ENCODE measurements at regions of chr7 and their contacts with region 1.

Region 1: DNA sequence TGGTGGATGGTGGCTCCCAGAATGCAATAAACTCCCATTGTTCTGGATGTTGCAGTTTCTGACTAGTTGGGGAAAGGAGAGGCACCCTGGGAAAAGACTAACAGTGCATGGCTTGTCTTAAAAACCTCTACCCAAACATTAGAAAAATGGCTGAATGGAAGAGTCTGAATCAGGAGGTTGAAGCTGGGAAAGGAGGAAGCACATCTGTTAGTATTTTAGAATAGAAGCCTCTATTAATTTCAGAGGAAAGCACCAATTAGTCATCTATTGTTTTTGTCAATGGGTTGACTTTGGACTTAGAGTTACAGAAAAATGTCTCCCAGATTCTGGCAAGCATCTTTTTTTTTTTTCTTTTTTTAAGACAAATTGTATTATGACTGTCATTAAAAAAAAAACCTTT is 56.1 kb upstream of the ELMO1 start:
- DNase-seq: peak in 3 of 42 donors; percentile 41 to 45 (median 45)

Region 2: DNA sequence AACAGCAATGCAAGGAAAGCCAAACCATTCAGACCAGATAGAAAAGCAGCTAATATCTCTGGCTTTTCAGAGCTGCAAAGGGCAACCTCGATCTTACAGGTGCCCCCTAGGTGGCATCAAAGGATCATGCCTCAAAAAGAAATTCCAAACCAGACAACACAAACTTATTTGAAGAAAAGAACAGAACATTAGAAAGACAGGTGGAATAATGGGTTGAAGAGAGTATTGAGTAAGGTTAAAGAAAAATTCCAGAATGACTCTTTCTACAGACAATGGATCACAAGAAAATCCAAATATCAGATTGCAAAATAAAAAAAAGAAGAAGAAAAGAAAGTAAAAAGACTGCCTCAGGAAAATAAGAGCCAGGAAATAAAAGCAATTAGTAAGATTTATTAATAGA is 269.9 kb before region 1 on chr7:
- intact Hi-C with region 1: loop called (anchors 10 kb)
- DNase-seq: peak in 20 of 42 donors; percentile 31 to 78 (median 54)

Region 3: DNA sequence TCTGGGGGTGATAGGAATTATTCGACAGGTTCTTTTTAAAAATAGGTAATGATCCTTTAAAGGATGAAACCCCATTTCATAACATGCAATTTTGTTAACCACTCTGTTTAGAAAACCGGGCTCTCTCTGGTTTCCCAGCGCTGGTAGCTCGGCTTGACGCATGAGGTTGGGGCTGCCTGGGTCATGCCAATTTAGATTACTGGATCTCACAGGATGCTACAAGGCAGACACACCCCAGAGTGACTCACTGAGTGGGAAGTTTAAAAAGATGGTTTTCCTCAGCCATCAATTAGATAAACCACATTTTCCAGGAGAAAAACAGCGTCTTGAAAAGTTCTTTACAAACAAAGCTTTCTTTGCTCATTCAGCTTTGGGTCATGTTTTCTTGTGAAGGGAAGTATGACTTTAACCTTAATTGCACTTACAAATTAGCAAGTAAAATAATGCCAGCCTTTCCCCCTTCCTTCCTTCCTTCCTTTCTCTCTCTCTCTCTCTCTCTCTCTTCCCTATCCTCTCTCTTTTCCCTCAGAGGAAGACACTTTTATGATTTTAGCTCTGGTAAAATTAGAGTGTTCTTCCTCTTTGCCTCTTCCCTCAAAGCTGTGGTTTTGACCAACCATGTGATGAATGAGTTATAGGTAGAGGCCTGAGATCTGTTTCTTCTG is 515.5 kb after region 1 on chr7:
- intact Hi-C with region 1: no loop called
- DNase-seq: no peak